ENCODE measurements at regions of chr12 and their contacts with region 1.

Region 1: GRCh38 chr12:75390899-75391538 is at the start of gene GLIPR1L2:
- DNase-seq: peak; percentile 91 to 99 (median 95)

Region 2: GRCh38 chr12:75322464-75322863 is 68.6 kb before region 1 on chr12:
- intact Hi-C with region 1: no loop called
- DNase-seq: no peak

Region 3: DNA sequence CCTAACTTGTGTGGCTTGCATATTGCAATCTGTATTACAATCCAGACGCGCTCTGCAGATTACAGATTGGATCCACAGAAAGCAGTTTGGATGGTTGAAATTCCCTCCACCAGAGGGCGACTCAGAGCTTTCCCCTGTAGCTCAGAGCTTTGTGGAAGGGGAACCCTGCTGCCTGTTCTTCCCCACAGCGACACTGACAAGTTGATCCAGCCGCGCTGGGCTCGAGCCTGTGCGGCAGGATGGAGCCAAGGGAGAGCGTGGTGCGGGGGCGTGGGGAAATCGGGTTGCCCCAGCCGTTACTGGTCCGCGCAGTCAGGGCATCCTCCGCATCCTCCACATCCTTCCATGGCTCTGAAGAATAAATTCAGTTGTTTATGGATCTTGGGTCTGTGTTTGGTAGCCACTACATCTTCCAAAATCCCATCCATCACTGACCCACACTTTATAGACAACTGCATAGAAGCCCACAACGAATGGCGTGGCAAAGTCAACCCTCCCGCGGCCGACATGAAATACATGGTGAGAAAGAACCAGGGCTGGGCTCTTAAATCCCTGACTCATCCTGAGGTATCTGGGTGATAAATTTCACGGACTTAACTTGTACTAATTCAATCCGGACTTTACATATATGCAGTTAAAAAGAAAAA is 56.5 kb before region 1 on chr12 and contains the start of gene GLIPR1L1:
- intact Hi-C with region 1: loop called (anchors 2 kb)
- DNase-seq: peak; percentile 67 to 96 (median 88)

Region 4: DNA sequence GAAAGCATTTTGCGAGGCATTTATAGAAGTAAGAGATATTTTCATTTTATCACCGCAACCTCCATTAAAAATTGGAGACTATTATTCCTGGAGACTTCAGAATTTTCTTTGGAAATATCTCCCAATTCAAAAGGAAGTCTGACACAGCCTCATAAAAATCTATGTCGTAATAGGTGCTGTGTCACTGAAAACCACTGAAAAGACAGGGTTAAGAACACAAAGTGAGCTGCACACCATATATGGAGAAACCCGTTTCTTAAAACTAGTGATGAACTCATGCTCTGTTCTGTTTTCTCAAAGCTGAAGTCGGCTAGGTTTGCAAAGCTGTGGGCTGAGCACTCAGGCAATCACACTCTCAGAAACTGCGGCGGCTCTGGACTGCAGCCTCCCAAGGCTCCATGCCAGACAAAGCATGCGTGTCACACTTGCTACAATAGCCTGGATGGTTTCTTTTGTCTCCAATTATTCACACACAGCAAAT is 89.5 kb after region 1 on chr12 and contains the start of gene GLIPR1:
- intact Hi-C with region 1: loop called (anchors 5 kb)
- DNase-seq: peak; percentile 40 to 92 (median 66)

Region 5: GRCh38 chr12:75505706-75506312 is 114.8 kb after region 1 on chr12:
- intact Hi-C with region 1: loop called (anchors 5 kb)
- DNase-seq: no peak

Region 6: GRCh38 chr12:75816897-75817296 is 425.9 kb after region 1 on chr12:
- intact Hi-C with region 1: no loop called
- DNase-seq: no peak

Measured in posterior cingulate gyrus (tissue), 11 donors.